ENCODE measurements at regions of chr2 and their contacts with region 1.

Region 1: GRCh38 chr2:54723131-54723995 is at the start of gene EML6:
- DNase-seq: peak; percentile 98 to 100
- H3K4me3 ChIP-seq: peak within 1 kb of the TSS; percentile 96
- H3K27ac ChIP-seq: peak within 1 kb of the TSS; percentile 69 to 84
- H3K4me1 ChIP-seq: peaks cover 0 to 6% of the 10 kb centered on the region in 2 donors
- H3K27me3 ChIP-seq: no peaks in the 10 kb centered on the region
- CTCF ChIP-seq: peak in 1 of 3 experiments; percentile 22
- total RNA-seq, gene EML6: not detected

Region 2: GRCh38 chr2:54115284-54116137 is 607.9 kb before region 1 on chr2 and contains the start of gene ACYP2:
- intact Hi-C with region 1: loop called (anchors 1 kb)
- DNase-seq: peak; percentile 70 to 97
- H3K4me3 ChIP-seq: peak within 1 kb of the TSS; percentile 62 to 83
- H3K27ac ChIP-seq: peak within 1 kb of the TSS; percentile 98 to 99
- H3K4me1 ChIP-seq: no peaks in the 10 kb centered on the region
- H3K27me3 ChIP-seq: no peaks in the 10 kb centered on the region
- CTCF ChIP-seq: peak in 1 of 3 experiments; percentile 5
- total RNA-seq, gene ACYP2: 0.96 TPM

Region 3: DNA sequence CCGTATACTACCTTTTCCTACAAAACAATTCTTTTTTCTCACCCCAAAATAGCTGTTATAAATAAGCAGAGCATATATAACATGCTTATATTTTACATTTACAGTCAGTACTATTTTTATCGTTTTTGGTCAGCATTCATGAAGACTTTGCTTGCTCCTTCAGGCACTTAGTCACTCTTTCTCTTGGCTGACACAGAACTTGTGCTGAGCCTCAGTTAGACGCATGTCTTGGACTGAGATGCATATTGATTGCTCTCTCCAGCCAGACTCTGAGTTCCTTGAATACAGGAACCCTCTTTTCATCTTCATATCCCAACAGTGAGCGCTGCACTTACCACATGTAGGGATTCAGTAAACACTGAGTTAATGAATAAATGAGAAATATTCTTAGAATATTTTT is 168.5 kb after region 1 on chr2:
- intact Hi-C with region 1: no loop called
- DNase-seq: no peak
- H3K4me3 ChIP-seq: no peak overlapping the region
- H3K27ac ChIP-seq: no peak overlapping the region
- H3K4me1 ChIP-seq: no peaks in the 10 kb centered on the region
- H3K27me3 ChIP-seq: no peaks in the 10 kb centered on the region
- CTCF ChIP-seq: no peak

Region 4: DNA sequence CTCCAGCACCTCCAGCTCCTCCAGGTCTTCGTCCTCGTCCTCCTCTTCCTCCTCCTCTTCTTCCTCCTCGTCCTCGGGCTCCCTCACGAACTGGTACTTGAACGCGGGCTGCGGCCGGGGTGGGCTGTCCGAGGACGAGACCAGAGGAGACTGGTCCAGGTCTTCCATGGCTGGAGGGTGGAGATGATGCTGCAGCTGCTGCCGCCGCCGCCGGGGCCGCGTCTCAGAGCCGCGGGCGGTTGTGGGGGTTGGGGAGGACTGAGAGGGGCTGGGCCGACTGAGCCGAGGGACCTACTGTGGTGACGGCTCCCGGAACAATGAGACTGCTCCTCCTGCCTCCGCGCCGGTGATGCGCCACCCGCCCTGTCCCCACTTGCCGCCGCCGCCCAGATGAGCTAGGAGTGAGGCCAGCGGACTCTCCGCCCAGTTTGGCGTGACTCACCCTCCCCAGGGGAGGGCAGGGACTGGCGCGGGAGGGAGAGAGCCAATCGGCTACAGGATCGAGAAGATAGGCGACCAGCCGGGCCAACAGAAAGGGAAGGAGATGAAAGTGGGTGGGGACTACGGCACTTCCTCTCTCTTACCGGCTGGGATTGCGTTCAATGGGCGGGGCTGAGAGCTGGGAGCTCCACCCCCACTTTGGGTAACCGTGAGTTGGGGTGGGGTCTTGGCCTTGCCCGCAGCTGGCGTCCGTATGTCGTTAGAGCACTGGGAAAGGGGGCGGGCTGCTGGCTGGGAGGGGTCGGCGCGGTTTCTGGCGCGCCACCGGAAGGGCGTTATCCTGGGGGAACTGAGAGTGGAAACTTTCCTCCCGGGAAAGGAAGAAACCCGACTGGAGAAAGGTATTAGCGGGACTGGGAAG is 327.0 kb after region 1 on chr2 and contains the start of gene RTN4:
- intact Hi-C with region 1: loop called (anchors 10 kb)
- DNase-seq: peak; percentile 98 to 99
- H3K4me3 ChIP-seq: peak within 1 kb of the TSS; percentile 79 to 90
- H3K27ac ChIP-seq: peak within 1 kb of the TSS; percentile 95 to 96
- H3K4me1 ChIP-seq: peaks cover 2 to 17% of the 10 kb centered on the region in 2 donors
- H3K27me3 ChIP-seq: no peaks in the 10 kb centered on the region
- CTCF ChIP-seq: no peak
- total RNA-seq, gene RTN4: 296 TPM

Region 5: DNA sequence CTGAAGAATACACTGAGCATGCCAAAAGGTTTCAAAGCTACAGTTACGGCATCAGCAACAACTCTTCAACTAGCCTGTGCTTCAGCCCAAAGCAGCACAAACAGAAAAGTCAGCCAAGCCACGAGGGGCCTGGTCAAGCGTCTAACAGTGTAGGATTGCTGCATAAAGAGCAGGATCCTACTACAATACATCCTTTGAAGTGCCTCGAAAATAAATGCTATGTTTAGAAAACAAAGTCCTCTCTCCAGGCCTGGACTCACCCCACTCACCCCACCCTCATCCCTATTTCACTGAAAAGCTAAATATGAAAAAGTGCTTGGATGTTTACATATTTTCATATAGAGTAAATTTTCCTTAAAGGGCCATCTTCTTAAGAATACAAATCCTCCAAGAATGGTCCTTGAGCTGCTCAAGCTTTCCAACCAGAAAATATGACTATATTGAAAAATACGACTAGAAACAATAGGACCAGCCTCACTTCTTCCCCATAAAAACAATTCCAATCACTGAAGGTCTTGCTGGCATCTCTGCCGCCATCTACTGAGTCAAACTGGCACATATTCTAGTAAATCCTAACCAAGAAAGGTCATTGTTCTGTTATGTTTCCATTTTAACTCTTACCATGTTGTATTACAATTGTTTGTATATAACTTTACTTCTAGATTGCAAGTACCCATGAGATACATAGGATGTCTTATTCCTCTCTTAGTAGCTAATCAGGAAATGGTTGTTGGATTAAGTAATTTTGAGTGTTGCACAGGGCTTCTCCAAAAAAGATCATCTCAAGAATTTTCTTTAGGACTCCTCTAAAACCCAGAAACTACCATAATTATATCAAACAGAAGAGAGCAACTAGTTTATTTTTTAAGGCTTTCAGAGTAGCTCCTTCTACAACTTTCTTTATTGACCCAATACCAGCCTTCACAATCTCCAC is 445.1 kb after region 1 on chr2:
- intact Hi-C with region 1: loop called (anchors 10 kb)
- DNase-seq: peak in 1 of 2 donors; percentile 83
- H3K4me3 ChIP-seq: no peak overlapping the region
- H3K27ac ChIP-seq: peak overlapping the region; percentile 73
- H3K4me1 ChIP-seq: peaks cover 0 to 36% of the 10 kb centered on the region in 2 donors
- H3K27me3 ChIP-seq: no peaks in the 10 kb centered on the region
- CTCF ChIP-seq: peak; percentile 63 to 73 (median 71)

Measured in ascending aorta (tissue), 2 donors.